ENCODE measurements at regions of chr19 and their contacts with region 1.

Region 1: GRCh38 chr19:49443366-49444099 is 2.2 kb upstream of the SLC17A7 start:
- DNase-seq: peak; percentile 85 to 99 (median 94)

Region 2: DNA sequence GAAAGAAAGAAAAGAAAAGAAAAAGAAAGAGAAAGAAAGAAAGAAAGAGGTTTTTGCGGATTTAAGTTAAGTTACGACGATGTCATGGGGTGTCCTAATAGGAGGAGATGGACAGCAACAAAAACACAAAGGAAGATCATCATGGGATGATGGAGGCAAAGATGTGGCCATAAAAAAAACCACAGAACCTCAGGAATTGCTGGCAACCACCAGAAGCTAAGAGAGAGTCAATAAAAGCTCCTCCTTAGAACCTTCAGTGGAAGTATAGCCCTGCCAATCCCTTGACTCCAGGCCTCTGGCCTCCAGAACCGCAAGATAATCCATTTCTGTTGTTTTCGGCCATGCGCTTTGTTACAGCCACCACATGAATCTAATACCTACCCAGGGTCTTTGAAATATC is 586.6 kb before region 1 on chr19:
- intact Hi-C with region 1: no loop called
- DNase-seq: no peak

Region 3: GRCh38 chr19:49224856-49225255 is 218.7 kb before region 1 on chr19:
- intact Hi-C with region 1: loop called (anchors 5 kb)
- DNase-seq: peak in 7 of 10 donors; percentile 12 to 84 (median 36)

Region 4: GRCh38 chr19:49391581-49392399 is 51.7 kb before region 1 on chr19:
- intact Hi-C with region 1: loop called (anchors 1 kb)
- DNase-seq: peak; percentile 49 to 97 (median 75)

Region 5: GRCh38 chr19:49487277-49488045 is 43.9 kb after region 1 on chr19 and contains the start of gene RPL13A:
- intact Hi-C with region 1: no loop called
- DNase-seq: peak; percentile 97 to 100 (median 99)

Region 6: GRCh38 chr19:49546825-49547565 is 103.5 kb after region 1 on chr19:
- intact Hi-C with region 1: no loop called
- DNase-seq: peak in 4 of 10 donors; percentile 46 to 70 (median 64)

Measured in posterior cingulate gyrus (tissue), 11 donors.